PC-3 (cell line): ENCODE measurements at regions of chr10 and their contacts with region 1.

Region 1: GRCh38 chr10:27369880-27370279 is 129.3 kb upstream of the ACBD5 start:
- DNase-seq: peak; percentile 41
- ATAC-seq: peak; percentile 20; the same call in 1 of the 2 replicates
- H3K4me3 ChIP-seq: no peak overlapping the region
- H3K27ac ChIP-seq: no peak overlapping the region
- H3K4me1 ChIP-seq: peaks cover 10% of the 10 kb centered on the region
- H3K27me3 ChIP-seq: no peaks in the 10 kb centered on the region
- CTCF ChIP-seq: peak; percentile 56; the same call in 1 of the 2 replicates

Region 2: GRCh38 chr10:27345455-27345920 is 24.4 kb before region 1 on chr10:
- CTCF ChIA-PET with region 1: no interaction called
- POLR2A ChIA-PET with region 1: no interaction called
- intact Hi-C with region 1: no loop called
- DNase-seq: no peak
- ATAC-seq: no peak
- H3K4me3 ChIP-seq: no peak overlapping the region
- H3K27ac ChIP-seq: no peak overlapping the region
- H3K4me1 ChIP-seq: no peaks in the 10 kb centered on the region
- H3K27me3 ChIP-seq: peaks cover 6% of the 10 kb centered on the region; the same call in 1 of the 2 replicates
- CTCF ChIP-seq: no peak

Region 3: GRCh38 chr10:27383595-27384542 is 14.0 kb after region 1 on chr10:
- CTCF ChIA-PET with region 1: no interaction called
- POLR2A ChIA-PET with region 1: no interaction called
- intact Hi-C with region 1: no loop called
- DNase-seq: peak; percentile 81
- ATAC-seq: peak; percentile 99
- H3K4me3 ChIP-seq: no peak overlapping the region
- H3K27ac ChIP-seq: peak overlapping the region; percentile 53
- H3K4me1 ChIP-seq: peaks cover 16% of the 10 kb centered on the region
- H3K27me3 ChIP-seq: no peaks in the 10 kb centered on the region
- CTCF ChIP-seq: no peak

Region 4: GRCh38 chr10:27661514-27662286 is 291.8 kb after region 1 on chr10:
- CTCF ChIA-PET with region 1: no interaction called
- POLR2A ChIA-PET with region 1: no interaction called
- intact Hi-C with region 1: loop called (anchors 2 kb)
- DNase-seq: peak; percentile 60
- ATAC-seq: no peak
- H3K4me3 ChIP-seq: no peak overlapping the region
- H3K27ac ChIP-seq: 0 out of 2 replicates have a peak overlapping the region, but pooled peaks have one; percentile 14
- H3K4me1 ChIP-seq: peaks cover 11% of the 10 kb centered on the region
- H3K27me3 ChIP-seq: no peaks in the 10 kb centered on the region
- CTCF ChIP-seq: no peak

Region 5: DNA sequence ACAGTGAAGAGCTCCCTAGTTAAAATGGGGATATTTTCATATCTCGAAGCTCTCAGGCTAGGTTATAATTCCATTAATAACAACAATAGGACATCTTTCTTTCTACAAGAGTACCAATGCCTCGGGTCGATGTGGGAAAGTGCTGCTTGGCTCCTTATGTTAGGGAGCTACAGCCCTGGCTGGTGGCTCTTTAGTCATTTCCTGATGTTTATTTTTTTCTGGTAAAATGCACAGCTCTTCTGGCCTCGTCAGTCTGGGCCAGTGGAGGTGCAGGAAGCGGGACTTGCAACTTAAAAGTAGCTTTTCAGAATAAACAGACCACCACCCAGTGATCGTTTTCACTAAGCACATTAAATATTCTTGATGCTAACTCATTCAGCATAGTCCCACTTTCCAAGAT is 317.4 kb after region 1 on chr10:
- CTCF ChIA-PET with region 1: no interaction called
- POLR2A ChIA-PET with region 1: no interaction called
- intact Hi-C with region 1: no loop called
- DNase-seq: peak; percentile 1
- ATAC-seq: peak; percentile 68
- H3K4me3 ChIP-seq: no peak overlapping the region
- H3K27ac ChIP-seq: no peak overlapping the region
- H3K4me1 ChIP-seq: no peaks in the 10 kb centered on the region
- H3K27me3 ChIP-seq: no peaks in the 10 kb centered on the region
- CTCF ChIP-seq: no peak